Mammary epithelial cell (primary cell): ENCODE measurements at regions of chr11 and their contacts with region 1.

Region 1: GRCh38 chr11:96331699-96332116 is 11.3 kb downstream of the MAML2 start:
- DNase-seq: no peak
- H3K4me3 ChIP-seq: no peak overlapping the region
- H3K27ac ChIP-seq: no peak overlapping the region
- H3K4me1 ChIP-seq: peaks cover 2% of the 10 kb centered on the region
- H3K27me3 ChIP-seq: no peaks in the 10 kb centered on the region
- CTCF ChIP-seq: no peak

Region 2: DNA sequence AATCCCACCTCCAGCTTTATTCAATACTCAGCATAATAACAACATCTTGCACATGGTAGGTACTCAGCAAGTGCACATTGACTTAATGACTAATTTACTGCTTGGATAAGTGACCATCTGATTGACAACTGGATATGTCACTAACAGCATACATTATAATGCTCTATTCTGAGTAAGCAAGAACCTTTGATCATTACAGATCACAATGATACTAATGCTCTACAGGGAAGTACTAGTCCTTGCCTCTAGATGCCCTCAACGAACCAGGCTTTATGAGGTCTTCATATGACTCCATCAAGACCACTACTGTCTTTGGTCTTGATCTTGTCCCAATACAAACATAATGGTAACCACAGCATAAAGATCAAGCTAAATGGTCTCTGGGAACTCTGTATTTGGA is 240.2 kb before region 1 on chr11:
- CTCF ChIA-PET with region 1: interaction called, 18 read pairs
- dilution Hi-C with region 1: no loop called
- in situ Hi-C with region 1: no loop called
- intact Hi-C with region 1: no loop called
- DNase-seq: no peak
- H3K4me3 ChIP-seq: no peak overlapping the region
- H3K27ac ChIP-seq: no peak overlapping the region
- H3K4me1 ChIP-seq: peaks cover 17% of the 10 kb centered on the region
- H3K27me3 ChIP-seq: no peaks in the 10 kb centered on the region
- CTCF ChIP-seq: peak in 1 of 2 donors; percentile 32

Region 3: DNA sequence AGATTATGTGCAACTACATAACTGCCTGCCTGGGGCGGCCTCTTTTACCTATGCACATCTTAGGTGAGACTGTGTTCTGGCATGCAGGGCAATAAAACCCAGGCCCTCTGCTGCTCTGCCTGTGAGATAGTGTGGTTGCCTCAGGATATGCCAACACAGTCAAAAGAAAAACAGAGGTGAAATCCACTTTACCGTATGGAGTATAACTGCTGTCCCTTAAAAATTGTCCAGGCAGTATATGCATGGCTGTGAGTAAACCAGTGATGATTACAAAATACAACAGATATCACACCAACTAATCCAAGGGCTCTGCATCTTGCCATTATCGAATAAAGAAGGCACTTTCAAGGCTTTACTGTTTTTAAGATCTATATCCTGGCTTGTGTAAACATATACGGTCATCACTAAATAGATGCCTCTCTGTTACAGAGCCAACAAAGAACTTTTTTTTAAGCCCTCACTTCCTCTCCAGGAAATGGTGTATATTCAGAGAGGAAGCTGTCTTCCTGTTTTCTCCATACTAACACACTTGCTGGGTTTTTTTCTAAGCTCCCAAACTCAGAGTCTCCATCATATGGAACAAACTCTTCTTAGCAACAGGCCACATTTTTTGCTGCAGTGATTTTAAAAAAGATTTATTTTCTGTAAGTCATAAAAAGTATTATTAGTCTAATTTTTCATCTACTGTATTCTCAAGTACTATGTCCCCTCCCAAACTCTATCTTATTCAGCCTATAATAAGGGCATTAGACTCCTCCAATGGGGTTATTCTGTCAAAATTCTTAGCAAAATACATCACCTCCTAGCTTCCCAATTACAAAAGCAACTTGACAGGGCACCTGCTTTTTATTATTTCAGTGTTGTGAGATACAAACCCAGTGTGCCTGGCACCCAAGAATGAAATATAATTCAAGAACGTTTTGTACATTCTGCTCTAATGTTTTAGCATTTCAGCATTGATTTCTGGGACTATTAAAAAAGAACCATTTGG is 124.0 kb before region 1 on chr11:
- CTCF ChIA-PET with region 1: no interaction called
- dilution Hi-C with region 1: no loop called
- in situ Hi-C with region 1: no loop called
- intact Hi-C with region 1: no loop called
- DNase-seq: peak; percentile 89
- H3K4me3 ChIP-seq: no peak overlapping the region
- H3K27ac ChIP-seq: peak overlapping the region; percentile 67
- H3K4me1 ChIP-seq: peaks cover 28% of the 10 kb centered on the region
- H3K27me3 ChIP-seq: no peaks in the 10 kb centered on the region
- CTCF ChIP-seq: peak in 1 of 2 donors; percentile 18